ENCODE measurements at regions of chr7 and their contacts with region 1.

Region 1: DNA sequence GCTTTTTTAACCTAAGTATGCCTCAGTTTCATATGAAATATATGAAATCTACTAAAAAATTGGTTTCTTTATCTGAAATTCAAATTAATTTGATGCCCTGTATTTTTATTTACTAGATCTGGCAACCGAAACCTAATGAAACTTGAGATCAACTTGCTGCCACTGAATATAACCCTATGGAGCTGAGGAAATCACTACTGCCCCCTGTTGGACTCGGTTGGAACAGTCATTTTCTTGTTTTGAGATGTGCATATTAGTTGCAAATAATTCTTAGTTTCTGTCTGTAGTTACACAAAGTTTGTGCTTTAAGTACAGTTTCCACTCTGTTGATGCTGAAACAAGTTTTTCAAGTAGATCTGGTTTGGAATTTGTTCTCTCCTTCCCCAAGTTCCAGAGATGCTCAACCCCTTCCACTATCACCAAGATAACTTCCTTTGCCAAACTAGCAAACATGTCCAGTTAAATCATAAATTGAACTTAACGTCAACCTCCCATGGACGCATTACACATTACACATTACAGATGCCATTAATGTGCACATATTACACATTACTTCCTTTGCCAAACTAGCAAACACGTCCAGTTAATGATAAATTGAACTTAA is 22.2 kb upstream of the EXOC4 start:
- DNase-seq: peak; percentile 56
- H3K4me3 ChIP-seq: no peak overlapping the region
- H3K27ac ChIP-seq: no peak overlapping the region
- H3K4me1 ChIP-seq: no peaks in the 10 kb centered on the region
- CTCF ChIP-seq: peak; percentile 92

Region 2: DNA sequence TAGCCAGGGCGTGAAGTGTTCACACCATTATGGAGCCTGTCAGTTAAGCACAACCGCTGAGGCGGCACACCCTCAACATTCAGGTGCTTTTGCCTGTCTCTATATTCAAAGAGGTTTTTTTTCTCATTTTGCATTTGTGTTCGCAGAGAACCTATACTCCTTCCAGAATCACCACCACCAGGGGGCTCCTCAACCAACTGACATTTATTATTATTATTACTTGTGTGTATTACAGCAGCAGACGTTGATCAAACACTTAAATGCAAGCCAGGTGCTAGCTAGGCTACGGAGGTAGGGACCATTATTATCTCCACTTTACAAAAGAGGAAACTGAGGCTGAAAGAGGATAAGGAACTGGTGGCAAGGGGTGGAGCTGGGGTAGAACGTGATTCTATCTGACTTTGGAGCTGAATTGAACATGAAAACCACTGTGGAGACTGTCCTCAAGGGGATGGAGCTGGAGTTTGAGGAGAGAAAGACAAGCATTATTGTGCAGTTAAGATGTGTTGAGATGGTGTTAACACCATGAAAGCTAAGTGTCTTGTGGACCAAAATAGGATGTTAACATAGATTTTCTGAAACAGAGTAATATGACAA is 520.6 kb before region 1 on chr7:
- CTCF ChIA-PET with region 1: no interaction called
- POLR2A ChIA-PET with region 1: no interaction called
- intact Hi-C with region 1: loop called (anchors 5 kb)
- DNase-seq: peak; percentile 53
- H3K4me3 ChIP-seq: no peak overlapping the region
- H3K27ac ChIP-seq: no peak overlapping the region
- H3K4me1 ChIP-seq: no peaks in the 10 kb centered on the region
- CTCF ChIP-seq: peak; percentile 86

Region 3: DNA sequence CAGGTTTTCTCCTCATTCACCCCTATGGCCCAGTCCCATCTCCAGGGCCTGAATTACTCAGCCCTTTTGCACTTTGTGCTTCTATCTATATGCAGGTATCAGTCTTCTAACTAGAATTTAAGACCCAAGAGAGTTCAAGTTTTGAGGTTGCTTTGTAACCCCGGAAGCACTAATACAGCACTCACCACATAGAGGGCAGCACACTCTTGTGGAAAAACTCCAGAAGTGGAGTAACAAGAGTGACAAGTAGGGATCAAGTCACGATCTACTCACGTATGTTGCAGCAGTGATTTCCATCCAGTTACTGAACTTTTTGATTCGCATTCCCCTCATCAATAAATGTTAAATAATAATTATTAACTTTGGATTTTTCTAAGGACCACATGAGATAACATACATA is 299.8 kb before region 1 on chr7:
- CTCF ChIA-PET with region 1: no interaction called
- POLR2A ChIA-PET with region 1: no interaction called
- intact Hi-C with region 1: loop called (anchors 5 kb)
- DNase-seq: peak; percentile 34
- H3K4me3 ChIP-seq: no peak overlapping the region
- H3K27ac ChIP-seq: no peak overlapping the region
- H3K4me1 ChIP-seq: no peaks in the 10 kb centered on the region
- CTCF ChIP-seq: peak; percentile 73

Region 4: GRCh38 chr7:133095119-133095671 is 135.5 kb before region 1 on chr7:
- CTCF ChIA-PET with region 1: no interaction called
- POLR2A ChIA-PET with region 1: no interaction called
- intact Hi-C with region 1: no loop called
- DNase-seq: no peak
- H3K4me3 ChIP-seq: no peak overlapping the region
- H3K27ac ChIP-seq: no peak overlapping the region
- H3K4me1 ChIP-seq: no peaks in the 10 kb centered on the region
- CTCF ChIP-seq: no peak

Region 5: GRCh38 chr7:133252858-133253518 is 22.3 kb after region 1 on chr7 and contains the start of gene EXOC4:
- CTCF ChIA-PET with region 1: no interaction called
- POLR2A ChIA-PET with region 1: no interaction called
- intact Hi-C with region 1: no loop called
- DNase-seq: peak; percentile 98
- H3K4me3 ChIP-seq: peak within 1 kb of the TSS; percentile 78
- H3K27ac ChIP-seq: peak within 1 kb of the TSS; percentile 30
- H3K4me1 ChIP-seq: no peaks in the 10 kb centered on the region
- CTCF ChIP-seq: no peak
- total RNA-seq, gene EXOC4: 75.1 and 83.4 TPM in 2 replicates

Measured in OCI-LY7 (cell line).